Mucosa of descending colon (tissue), 3 donors: ENCODE measurements at regions of chr1 and their contacts with region 1.

Region 1: GRCh38 chr1:156601122-156601830 is at the start of gene GPATCH4:
- DNase-seq: peak; percentile 76 to 83 (median 78)
- ATAC-seq: peak; percentile 89
- H3K4me3 ChIP-seq: peak within 1 kb of the TSS; percentile 41
- H3K4me1 ChIP-seq: peaks cover 13% of the 10 kb centered on the region
- CTCF ChIP-seq: no peak
- total RNA-seq, gene GPATCH4: 17.4 to 25.9 (median 21.5) TPM

Region 2: DNA sequence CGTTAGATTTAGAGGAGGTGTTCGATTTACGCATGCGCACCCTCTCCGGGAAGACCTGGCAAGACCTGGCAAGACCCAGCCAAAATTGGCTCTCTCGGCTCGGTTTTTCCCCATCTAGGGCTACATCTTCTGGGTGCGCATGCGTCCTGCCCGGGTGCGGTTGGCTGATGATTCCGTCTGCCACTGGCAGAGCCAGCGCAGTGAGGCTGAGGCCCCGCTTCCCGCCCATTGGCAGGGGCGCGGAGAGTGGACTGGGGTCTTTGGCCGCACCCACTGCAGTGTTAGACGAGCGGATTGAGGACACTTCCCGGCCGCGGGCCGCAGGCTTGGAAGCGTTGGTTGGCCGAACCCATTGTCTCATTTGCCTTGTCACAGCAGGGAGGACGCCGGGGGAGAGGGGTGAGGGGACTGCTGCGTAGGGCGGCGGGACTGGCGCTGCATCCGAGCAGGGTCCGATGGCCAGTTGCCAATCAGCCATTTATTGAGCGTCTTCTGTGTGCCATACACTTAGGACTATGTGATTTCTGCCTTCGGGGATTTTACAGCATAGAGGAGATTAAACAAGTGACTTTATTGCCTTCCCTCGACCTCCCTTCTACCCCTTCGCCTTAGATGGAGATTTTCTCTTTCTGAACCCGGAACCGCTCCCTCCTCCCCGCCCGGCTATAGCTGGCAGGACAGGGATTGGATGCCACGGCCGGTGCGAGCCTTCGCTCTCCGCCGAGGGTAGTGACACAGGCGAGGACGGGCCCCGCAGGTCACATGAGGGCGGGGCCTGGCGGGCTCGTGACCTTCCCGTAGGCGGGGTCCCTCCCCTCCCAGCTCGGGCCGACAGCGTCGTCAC is 144.4 kb before region 1 on chr1:
- intact Hi-C with region 1: loop called in 1 of 2 experiments (anchors 10 kb)
- DNase-seq: peak; percentile 98 to 99 (median 99)
- ATAC-seq: peak; percentile 91
- H3K4me3 ChIP-seq: peak overlapping the region; percentile 13
- H3K4me1 ChIP-seq: peaks cover 8% of the 10 kb centered on the region
- CTCF ChIP-seq: no peak

Region 3: DNA sequence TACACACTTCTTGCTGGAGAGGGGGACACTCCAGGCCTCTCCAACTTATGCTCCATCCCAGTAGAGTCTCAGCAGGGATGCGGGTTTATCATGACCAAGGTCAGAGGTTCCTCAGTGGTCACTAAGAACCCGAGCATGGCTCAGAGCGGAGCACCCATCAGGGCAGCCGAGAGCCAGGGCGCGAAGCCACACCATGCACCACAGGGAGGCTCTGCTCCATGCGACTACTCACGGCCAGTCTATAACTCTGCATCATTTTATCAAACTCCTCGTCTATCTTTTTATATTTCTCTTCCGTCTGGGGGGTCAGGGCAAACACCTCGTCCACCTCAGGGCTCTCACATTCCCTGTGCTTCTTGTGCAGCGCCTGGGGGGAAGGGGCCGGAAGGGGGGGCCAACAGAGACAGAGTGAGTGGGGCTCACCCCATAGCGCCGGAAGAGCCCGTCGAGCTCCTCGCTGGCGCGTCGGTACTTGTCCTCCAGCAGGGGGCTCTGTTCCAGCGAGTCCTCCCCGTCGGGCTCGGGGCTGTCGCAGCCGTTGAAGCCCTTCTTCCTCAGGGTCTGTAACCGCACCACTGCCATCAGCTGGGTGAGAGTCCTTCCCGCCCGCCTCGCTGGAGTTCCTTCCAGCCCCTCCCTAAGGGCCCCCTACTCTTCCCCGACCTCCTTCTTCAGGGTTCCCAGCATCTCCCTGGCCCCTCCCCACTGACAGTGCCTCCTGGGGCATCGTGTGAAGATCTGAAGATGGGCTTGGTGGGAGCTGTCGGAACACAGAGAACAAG is 120.7 kb before region 1 on chr1:
- intact Hi-C with region 1: loop called in 1 of 2 experiments (anchors 10 kb)
- DNase-seq: peak; percentile 60 to 80 (median 68)
- ATAC-seq: peak; percentile 58
- H3K4me3 ChIP-seq: no peak overlapping the region
- H3K4me1 ChIP-seq: no peaks in the 10 kb centered on the region
- CTCF ChIP-seq: peak; percentile 38

Region 4: GRCh38 chr1:156728597-156729462 is 127.6 kb after region 1 on chr1 and contains the start of gene ISG20L2:
- intact Hi-C with region 1: no loop called
- DNase-seq: peak; percentile 95 to 99 (median 98)
- ATAC-seq: peak; percentile 93
- H3K4me3 ChIP-seq: peak within 1 kb of the TSS; percentile 60
- H3K4me1 ChIP-seq: peaks cover 41% of the 10 kb centered on the region
- CTCF ChIP-seq: no peak
- total RNA-seq, gene ISG20L2: 27.8 to 33.0 (median 31.0) TPM

Region 5: GRCh38 chr1:156927215-156928042 is 326.2 kb after region 1 on chr1:
- intact Hi-C with region 1: no loop called
- DNase-seq: peak in 2 of 3 donors; percentile 78 to 83
- ATAC-seq: peak; percentile 76
- H3K4me3 ChIP-seq: no peak overlapping the region
- H3K4me1 ChIP-seq: peaks cover 20% of the 10 kb centered on the region
- CTCF ChIP-seq: peak; percentile 45